PC-3 (cell line): ENCODE measurements at regions of chrX and their contacts with region 1.

Region 1: DNA sequence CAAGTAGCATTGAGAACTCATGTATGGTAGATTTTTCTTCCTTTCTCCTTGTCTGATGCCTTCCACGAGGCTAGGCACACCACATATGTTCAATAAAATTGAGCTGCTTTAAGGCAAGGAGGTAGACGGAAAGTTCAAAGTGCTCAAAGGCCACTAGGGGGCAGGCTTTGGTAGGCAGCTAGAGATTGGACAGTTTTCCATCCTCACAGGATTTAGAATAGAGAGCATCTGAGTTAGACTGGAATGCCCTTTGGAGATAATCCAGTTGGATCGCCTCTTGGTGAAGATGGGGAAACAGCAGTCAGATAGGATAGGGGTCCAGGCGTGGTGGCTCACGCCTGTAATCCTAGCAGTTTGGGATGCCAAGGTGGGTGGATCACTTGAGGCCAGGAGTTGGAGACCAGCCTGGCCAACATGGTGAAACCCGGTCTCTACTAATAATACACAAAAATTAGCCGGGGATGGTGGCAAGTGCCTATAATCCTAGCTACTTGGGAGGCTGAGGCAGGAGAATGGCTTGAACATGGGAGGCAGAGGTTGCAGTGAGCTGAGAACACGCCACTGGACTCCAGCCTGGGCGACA is 30.4 kb downstream of the ELF4 start:
- DNase-seq: peak; percentile 75
- ATAC-seq: peak; percentile 88
- H3K4me3 ChIP-seq: no peak overlapping the region
- H3K27ac ChIP-seq: no peak overlapping the region
- H3K4me1 ChIP-seq: no peaks in the 10 kb centered on the region
- H3K27me3 ChIP-seq: no peaks in the 10 kb centered on the region
- CTCF ChIP-seq: peak; percentile 86

Region 2: GRCh38 chrX:130139474-130140201 is 59.7 kb after region 1 on chrX:
- CTCF ChIA-PET with region 1: no interaction called
- POLR2A ChIA-PET with region 1: no interaction called
- intact Hi-C with region 1: no loop called
- DNase-seq: no peak
- ATAC-seq: no peak
- H3K4me3 ChIP-seq: no peak overlapping the region
- H3K27ac ChIP-seq: no peak overlapping the region
- H3K4me1 ChIP-seq: peaks cover 5% of the 10 kb centered on the region
- H3K27me3 ChIP-seq: no peaks in the 10 kb centered on the region
- CTCF ChIP-seq: no peak

Region 3: GRCh38 chrX:130196466-130196865 is 116.6 kb after region 1 on chrX:
- CTCF ChIA-PET with region 1: interaction called, 5 read pairs
- POLR2A ChIA-PET with region 1: no interaction called
- intact Hi-C with region 1: loop called (anchors 1 kb)
- DNase-seq: no peak
- ATAC-seq: no peak
- H3K4me3 ChIP-seq: no peak overlapping the region
- H3K27ac ChIP-seq: no peak overlapping the region
- H3K4me1 ChIP-seq: no peaks in the 10 kb centered on the region
- H3K27me3 ChIP-seq: no peaks in the 10 kb centered on the region
- CTCF ChIP-seq: no peak

Region 4: GRCh38 chrX:130669233-130669632 is 589.3 kb after region 1 on chrX:
- CTCF ChIA-PET with region 1: no interaction called
- POLR2A ChIA-PET with region 1: no interaction called
- intact Hi-C with region 1: no loop called
- DNase-seq: peak; percentile 11
- ATAC-seq: no peak
- H3K4me3 ChIP-seq: no peak overlapping the region
- H3K27ac ChIP-seq: no peak overlapping the region
- H3K4me1 ChIP-seq: 0 out of 2 replicates have a peak, but pooled peaks cover 4% of the 10 kb centered on the region
- H3K27me3 ChIP-seq: no peaks in the 10 kb centered on the region
- CTCF ChIP-seq: no peak